Head of caudate nucleus (tissue), 42 donors: ENCODE measurements at regions of chr4 and their contacts with region 1.

Region 1: DNA sequence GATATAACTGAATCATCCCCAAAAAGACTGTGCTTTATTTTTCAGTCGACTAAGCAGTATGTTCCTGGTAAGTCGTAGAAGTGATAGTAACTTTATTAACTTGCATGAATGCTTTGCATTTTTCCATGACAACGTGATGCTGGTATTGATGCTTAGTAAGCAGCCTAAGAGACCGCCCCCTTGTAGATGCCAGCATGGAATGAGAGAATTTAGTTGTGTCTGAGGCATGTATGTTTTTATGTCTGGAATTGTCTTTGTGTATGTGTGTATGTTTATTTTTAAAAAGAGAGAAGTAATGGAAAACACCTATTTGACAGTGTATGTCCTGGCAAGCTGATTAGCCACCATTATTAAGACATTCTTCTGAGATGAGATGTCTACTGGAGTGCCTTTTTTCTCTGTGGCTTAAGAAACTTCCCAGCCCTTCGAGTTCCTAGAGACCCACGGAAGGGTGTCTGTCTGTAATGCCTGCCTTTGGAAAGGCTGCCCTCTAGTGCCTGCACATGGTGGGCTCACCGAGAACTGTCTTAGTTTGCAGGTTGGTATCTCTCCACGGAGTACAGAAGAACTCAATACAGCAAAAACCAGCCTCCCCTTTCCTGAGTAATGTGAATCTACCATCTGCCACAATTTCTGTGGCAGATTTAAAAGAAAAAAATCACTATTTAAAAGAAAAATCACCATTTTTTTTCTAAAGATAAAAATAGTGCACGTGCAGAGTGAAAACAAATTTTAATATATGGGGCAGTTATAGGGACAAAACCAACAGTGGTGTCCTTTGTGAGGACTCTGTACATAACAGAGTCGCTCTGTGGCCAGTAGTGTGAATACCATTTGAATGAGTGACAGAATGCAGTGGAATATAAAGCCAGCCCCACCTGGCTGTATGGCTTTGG is 85.9 kb downstream of the AASDH start:
- DNase-seq: peak; percentile 58 to 93 (median 80)

Region 2: DNA sequence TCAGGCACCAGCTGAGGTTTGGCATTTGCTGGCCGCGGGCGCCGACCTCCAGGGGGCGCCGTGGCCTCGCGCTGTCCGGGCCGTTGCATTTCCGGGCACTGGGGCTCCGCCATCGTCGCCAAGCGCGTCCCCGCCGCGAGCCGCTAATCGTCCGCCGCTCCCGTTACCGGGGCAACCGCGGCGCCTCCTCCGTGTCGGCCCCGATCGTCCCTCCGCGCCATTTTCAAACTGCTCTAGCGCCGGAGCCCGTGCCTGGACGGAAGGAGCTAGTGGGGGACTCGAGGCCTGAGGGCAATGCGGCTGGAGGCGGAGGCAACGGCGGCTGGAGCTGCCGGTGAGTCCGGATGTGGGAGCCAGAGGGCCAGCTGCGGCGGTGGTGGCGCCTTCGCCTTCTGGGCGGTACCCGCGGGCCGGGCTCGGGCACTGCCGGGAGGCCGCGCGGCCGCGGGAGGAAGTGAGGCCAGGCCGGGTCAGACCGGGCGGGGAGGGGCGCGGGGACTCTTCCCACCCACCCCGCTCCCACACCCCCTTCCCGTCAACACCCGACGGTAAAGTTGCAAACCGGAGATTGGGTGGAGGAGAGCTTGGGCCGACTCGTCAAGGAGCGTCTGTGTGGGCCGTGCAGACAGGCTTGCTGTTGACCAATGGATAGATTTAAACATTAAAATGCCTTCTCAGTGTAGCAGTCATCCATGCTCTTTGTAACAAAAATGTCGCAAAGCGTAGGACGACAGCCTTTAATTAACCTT is 352.5 kb before region 1 on chr4 and contains the start of gene CEP135:
- intact Hi-C with region 1: loop called (anchors 2 kb)
- DNase-seq: peak; percentile 78 to 97 (median 94)

Region 3: DNA sequence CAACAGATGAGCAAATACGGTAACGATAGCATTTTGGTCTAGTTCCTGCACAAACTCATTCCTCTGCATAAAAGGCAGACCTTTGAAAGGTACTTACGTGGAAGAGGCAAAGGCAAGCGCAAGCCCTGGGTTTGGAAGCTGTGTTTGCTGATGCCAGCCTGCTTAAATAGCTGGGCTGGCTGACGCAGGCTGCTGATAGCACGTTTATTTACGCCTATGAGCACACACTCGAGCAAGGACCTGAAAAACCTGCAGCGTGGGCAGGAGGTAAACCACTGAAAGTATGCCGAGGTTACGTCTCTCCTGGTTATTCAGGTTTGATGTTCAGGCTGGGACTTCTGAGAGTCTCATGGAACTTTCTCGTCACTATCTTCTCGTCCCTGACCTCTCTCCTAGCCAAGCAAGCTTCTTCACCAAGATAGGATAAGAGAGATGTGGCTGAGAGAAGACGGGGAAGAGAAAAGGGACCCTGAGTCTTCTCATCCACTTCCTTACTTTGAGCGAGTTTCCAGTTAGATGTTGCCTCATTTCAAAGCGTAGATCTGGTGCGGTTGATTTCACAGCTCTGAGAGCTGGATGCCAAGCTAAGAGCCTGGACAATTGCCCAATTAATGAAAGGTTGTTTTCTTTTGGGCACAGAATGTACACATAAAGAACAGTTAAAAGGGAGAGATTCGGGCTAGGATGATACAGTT is 379.9 kb after region 1 on chr4 and contains the start of gene HOPX:
- intact Hi-C with region 1: no loop called
- DNase-seq: no peak